Ascending aorta (tissue), 2 donors: ENCODE measurements at regions of chr9 and their contacts with region 1.

Region 1: DNA sequence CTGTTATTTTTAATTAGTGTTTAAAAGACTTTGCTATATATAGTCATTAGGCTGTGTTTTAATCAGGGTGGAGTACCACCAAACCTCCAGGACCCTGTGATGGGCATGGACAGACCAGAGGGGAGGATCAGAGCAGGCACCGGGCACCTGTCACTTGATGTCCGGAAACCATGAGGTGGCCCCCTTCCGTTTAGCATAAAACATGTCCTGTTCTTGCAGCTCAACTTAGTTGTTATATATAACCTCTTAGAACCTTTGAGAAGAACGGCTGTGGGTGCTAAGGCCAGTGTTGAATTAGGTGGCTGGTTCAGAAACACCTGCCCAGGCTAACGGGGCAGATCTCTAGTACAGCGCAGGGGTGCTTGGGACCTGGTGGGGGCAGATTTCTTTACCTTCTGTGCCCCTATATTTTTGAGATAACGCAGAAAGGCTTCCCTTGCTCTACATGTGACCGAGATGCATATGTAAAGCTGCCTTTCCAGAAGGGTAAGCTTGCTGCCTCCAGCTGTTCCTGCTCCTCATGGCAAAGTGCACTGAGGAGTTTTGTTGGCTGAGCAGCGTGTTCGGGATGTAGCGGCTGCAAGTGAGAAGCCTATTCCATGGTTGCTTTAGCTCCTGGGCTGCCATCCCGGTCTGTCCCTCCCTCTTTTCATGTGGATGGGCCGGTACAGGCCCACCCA is 255.5 kb downstream of the FANCC start:
- DNase-seq: no peak
- H3K4me3 ChIP-seq: peak overlapping the region in 1 of 2 donors; percentile 46
- H3K27ac ChIP-seq: peak overlapping the region; percentile 84 to 95
- H3K4me1 ChIP-seq: peaks cover 29 to 90% of the 10 kb centered on the region in 2 donors
- H3K27me3 ChIP-seq: no peaks in the 10 kb centered on the region
- CTCF ChIP-seq: no peak

Region 2: DNA sequence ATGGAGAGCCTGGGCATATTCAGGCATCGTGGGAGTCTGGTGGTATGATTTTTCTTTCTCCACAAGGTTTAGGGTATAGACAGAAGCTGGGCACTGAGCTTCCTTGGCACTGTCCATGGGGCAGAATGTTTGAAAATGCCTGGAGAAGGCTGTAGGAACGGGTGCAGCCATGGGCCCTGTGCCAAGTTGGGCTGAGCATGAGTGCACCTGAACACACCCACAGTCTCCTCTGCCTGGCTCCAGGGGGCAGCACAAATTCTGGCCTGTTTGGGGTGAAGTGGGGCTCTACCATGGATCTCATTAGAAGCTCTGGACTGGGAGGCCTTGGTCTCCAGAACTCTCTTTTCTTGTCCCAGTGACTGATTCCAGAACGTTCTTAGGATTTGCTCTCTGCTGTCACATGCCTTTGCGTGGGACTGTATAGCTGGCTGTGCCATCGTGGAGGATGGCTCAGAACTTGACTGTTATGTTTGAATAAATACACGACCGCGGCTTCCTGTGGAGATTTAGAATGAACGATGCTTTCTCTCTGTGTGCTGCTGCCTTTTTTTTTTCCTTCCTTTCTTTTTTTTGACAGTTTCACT is 25.7 kb after region 1 on chr9:
- intact Hi-C with region 1: loop called (anchors 2 kb)
- DNase-seq: no peak
- H3K4me3 ChIP-seq: peak overlapping the region in 1 of 2 donors; percentile 1
- H3K27ac ChIP-seq: peak overlapping the region; percentile 94 to 95
- H3K4me1 ChIP-seq: peaks cover 51 to 83% of the 10 kb centered on the region in 2 donors
- H3K27me3 ChIP-seq: no peaks in the 10 kb centered on the region
- CTCF ChIP-seq: peak in 1 of 3 experiments; percentile 12

Region 3: DNA sequence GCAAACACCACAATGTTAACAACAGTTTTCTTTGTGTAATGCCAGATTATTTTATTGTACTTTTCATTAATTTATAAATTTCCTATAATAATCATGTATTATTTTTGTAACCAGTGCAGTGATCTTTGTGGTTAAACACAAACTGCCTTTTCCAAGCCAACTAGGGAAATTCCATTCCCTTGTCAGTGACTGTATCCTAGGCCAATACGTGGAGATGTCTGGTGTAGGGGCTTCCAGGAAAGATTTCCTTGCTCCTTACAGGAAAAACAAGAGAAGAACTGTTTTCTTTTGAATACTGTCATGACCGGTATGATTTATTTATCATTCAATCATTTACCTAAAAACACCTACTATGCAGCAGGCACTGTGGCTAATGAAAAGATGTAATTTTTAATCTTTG is 224.1 kb after region 1 on chr9:
- intact Hi-C with region 1: no loop called
- DNase-seq: no peak
- H3K4me3 ChIP-seq: no peak overlapping the region
- H3K27ac ChIP-seq: no peak overlapping the region
- H3K4me1 ChIP-seq: no peaks in the 10 kb centered on the region
- H3K27me3 ChIP-seq: no peaks in the 10 kb centered on the region
- CTCF ChIP-seq: no peak